ENCODE measurements at regions of chr19 and their contacts with region 1.

Region 1: DNA sequence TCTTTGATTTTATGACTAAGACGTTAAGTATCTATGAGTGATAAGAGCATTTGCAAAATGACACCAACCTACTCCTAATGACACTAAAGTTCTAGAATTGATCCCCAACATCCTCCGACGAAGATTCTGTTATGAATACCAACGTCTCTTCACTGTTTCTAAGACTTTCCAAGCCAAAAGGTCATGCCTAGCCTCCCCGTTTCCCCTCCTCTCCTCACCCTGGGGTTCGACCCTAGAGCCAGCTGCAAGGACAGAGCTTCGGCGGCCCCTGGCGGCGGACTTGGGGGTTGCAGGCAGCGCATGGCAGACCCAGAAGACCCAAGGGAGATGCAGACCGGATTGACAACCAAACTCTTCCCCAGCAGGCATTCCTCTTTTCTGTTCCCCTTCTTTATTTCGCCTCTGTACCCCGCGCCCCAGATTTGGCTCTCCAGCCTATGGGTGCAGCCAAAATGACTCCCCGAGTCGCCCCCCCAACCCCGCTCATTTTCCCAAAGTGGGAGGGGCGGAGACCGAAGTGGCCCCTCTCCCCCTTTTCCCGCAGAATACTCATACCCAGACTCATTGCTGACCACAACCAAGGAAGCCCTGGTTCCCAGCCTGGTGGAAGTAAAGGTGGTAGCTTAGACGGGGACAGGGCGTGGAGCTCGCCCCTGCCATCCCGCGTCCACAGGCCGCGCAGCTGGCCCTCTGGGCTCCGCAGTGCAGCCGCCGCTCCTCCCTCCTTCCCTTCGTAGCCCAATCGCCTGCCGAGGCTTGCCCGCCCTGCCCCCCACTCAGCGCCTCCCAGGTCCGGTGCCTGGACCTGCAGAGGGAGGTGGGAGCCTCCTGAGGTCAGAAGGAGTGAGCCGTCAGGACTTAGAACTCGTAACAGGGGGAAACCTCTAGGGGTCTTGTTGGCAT is 4.1 kb upstream of the EML2 start:
- DNase-seq: peak; percentile 90
- H3K4me3 Mint-ChIP-seq: peak overlapping the region; percentile 23
- H3K27ac Mint-ChIP-seq: peak overlapping the region; percentile 75
- H3K4me1 Mint-ChIP-seq: peaks cover 56% of the 10 kb centered on the region
- H3K27me3 Mint-ChIP-seq: peaks cover 3% of the 10 kb centered on the region

Region 2: GRCh38 chr19:45439569-45440254 is 203.6 kb before region 1 on chr19:
- CTCF ChIA-PET with region 1: interaction called, 10 read pairs
- POLR2A ChIA-PET with region 1: no interaction called
- DNase-seq: peak; percentile 80
- H3K4me3 Mint-ChIP-seq: peak overlapping the region; percentile 71
- H3K27ac Mint-ChIP-seq: peak overlapping the region; percentile 78
- H3K4me1 Mint-ChIP-seq: peaks cover 34% of the 10 kb centered on the region
- H3K27me3 Mint-ChIP-seq: no peaks in the 10 kb centered on the region

Region 3: DNA sequence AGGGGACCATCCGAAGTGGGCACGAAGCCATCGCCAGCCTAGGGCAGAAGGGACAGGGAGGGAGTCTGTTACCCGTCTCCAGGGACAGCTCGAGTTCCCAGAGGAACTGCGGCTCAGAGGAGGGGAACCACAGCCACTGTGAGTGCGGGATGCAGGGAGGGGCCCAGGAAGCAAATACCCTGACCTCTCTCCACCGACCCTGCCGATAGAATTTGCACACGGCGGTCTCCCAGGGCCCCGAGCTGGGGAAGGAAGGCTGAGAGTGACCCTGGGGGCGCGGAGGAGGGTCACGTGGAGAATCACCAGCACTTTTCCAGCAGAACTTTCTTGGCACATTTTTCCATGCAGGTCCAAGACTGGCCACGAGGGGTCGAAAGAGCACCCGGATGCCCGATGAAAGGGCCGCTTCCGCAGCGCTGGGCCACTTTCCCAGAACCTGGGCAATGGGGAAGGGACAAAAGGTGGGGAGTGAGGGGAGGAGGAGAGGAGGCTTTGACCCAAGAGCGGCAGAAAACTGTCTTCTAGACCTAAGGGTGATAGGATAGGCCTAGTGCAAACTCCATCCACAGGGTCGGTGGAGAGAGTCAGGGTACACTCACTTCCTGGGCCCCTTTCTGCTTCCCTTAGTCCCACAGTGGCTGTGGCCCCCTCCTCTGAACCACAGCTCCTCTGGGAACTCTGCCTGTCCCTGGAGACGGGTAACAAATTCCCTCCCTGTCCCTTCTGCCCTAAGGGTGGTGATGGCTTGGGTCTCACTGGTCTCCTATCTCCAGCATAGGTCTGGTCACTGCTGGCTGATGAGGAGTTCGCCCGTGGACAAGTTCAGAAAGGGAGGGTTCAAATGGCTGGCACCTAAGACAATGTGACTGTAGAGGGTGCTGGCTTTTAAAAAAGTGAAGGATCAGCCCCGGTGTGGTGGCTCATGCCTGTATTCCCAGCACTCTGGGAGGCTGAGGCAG is 35.9 kb before region 1 on chr19:
- CTCF ChIA-PET with region 1: interaction called, 14 read pairs
- POLR2A ChIA-PET with region 1: no interaction called
- DNase-seq: peak; percentile 40
- H3K4me3 Mint-ChIP-seq: no peak overlapping the region
- H3K27ac Mint-ChIP-seq: peak overlapping the region; percentile 85
- H3K4me1 Mint-ChIP-seq: peaks cover 16% of the 10 kb centered on the region
- H3K27me3 Mint-ChIP-seq: peaks cover 10% of the 10 kb centered on the region

Region 4: DNA sequence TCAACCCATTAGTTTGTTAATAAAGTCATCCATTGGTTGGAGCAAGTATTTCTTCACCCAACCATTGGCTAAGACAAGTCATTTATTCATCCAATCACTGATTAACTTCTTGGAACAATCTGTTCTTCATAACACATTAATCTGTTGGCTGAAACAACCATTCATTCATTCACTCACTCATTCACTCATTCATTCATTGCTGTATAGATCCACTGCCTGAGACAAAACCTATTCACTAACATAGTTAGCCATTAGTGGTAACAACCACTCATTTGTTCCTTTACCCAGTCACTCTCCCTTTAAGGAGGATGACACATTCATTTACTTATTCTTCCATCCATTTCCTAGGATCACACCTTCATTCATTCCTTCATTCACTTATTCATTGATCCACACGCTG is 19.3 kb before region 1 on chr19:
- CTCF ChIA-PET with region 1: interaction called, 13 read pairs
- POLR2A ChIA-PET with region 1: no interaction called
- DNase-seq: no peak
- H3K4me3 Mint-ChIP-seq: no peak overlapping the region
- H3K27ac Mint-ChIP-seq: no peak overlapping the region
- H3K4me1 Mint-ChIP-seq: peaks cover 3% of the 10 kb centered on the region
- H3K27me3 Mint-ChIP-seq: no peaks in the 10 kb centered on the region

Region 5: DNA sequence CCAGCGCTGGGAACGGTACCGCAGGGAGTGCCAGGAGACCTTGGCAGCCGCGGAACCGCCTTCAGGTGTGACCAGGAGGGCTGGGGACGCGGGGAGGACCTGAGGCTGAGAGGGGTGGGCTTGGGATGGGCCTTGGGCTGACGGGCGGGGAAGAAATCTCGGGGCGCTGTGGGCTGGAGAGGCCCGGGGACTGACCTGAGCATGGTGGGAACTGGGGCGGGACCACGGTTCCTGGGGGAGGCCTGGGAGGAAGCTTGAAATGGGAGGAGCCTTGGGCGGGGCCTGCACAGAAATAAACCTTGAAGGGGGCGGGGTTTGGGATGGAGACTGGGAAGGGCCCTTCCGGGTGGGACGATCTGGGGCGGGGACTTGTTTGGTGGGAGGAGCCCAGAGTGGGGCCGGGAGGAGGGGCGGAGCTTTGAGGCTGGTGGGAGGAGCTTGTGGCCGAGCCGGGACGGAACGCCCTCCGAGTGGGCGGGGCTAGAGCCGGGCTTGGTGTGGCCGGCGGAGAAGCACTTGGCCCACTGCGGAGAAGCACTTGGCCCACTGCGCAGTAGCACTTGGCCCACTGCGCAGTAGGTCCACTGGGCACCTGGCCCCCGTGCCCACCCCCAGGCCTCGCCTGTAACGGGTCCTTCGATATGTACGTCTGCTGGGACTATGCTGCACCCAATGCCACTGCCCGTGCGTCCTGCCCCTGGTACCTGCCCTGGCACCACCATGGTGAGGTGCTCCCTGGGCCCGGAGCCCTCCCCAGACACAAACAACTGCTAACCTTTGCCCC is 27.6 kb after region 1 on chr19:
- CTCF ChIA-PET with region 1: interaction called, 20 read pairs
- POLR2A ChIA-PET with region 1: no interaction called
- DNase-seq: peak; percentile 63
- H3K4me3 Mint-ChIP-seq: no peak overlapping the region
- H3K27ac Mint-ChIP-seq: no peak overlapping the region
- H3K4me1 Mint-ChIP-seq: peaks cover 34% of the 10 kb centered on the region
- H3K27me3 Mint-ChIP-seq: peaks cover 26% of the 10 kb centered on the region

Region 6: DNA sequence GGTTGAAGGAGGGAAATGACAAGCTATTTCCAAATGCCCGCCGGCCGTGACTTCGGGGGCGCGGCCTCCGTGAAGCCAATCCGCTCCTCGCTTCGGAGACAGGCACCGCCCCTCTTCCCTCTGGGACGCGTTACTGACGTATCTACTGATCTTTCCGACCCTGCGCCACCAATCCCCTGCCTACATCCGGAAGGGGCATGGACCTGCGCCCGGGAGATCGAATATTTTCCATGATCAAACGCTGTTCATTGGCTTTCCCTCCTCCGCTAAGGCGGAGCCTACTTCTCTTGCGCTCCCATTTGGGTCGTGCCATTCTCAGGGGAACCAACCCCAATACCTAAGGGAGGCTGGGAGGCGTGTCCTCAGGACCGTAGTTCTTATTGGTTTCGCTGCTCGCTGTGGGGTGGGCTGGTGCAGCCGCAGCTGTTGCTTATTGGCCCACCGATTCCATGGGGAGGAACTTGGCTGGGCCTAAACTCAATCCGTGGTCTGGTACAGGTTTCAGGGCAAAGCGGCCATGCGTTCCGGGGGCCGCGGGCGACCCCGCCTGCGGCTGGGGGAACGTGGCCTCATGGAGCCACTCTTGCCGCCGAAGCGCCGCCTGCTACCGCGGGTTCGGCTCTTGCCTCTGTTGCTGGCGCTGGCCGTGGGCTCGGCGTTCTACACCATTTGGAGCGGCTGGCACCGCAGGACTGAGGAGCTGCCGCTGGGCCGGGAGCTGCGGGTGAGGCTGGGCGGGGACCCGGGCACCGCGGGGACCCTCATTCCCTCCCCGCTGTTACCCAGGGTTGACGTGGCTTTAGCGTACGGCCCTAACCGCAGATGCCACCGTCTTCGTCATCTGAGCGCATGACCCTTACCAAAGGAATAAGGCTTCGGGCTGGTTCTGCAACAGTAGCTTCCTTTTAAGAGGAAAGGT is 49.2 kb after region 1 on chr19 and contains the start of gene QPCTL:
- CTCF ChIA-PET with region 1: interaction called, 13 read pairs
- POLR2A ChIA-PET with region 1: no interaction called
- DNase-seq: peak; percentile 99
- H3K4me3 Mint-ChIP-seq: peak within 1 kb of the TSS; percentile 92
- H3K27ac Mint-ChIP-seq: peak within 1 kb of the TSS; percentile 91
- H3K4me1 Mint-ChIP-seq: peaks cover 18% of the 10 kb centered on the region
- H3K27me3 Mint-ChIP-seq: no peaks in the 10 kb centered on the region
- total RNA-seq, gene QPCTL: 6.1 to 7.3 TPM

Region 7: DNA sequence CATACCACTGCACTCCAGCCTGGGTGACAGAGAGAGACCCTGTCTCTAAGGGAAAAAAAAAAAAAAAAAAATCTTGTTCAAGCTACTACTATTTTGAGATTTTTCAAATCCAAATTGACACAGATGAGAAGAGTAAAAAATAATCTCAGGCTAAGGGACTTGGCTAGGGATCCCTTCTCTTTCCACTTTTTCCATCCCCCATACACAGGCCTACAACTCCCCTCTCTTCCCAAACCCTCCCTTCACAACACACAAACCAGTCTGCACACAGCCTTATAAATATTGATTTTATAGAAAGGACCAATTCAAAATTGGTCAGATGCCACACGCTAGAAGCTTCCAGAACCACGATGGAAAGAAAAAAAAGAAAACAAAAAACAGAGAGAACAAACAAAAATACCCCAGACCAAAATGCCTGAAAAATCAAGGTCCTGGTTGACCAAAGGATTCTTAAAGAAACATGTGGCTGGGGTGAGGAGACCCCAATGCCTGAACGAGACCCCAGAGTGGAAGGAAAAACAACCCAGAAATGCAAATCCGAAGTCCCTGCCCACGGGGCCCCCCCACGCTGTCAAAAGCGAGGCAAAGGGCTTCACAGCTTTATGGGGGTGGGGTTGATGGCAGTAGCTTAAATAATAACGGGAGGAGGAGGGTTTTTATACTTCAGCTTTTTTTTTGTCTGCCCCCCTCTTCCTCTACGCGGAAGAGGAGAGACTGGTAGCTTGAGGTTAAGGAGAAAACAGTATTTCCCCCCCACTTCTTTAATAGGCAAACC is 67.3 kb after region 1 on chr19:
- CTCF ChIA-PET with region 1: no interaction called
- POLR2A ChIA-PET with region 1: no interaction called
- DNase-seq: no peak
- H3K4me3 Mint-ChIP-seq: no peak overlapping the region
- H3K27ac Mint-ChIP-seq: peak overlapping the region; percentile 25
- H3K4me1 Mint-ChIP-seq: peaks cover 15% of the 10 kb centered on the region
- H3K27me3 Mint-ChIP-seq: no peaks in the 10 kb centered on the region